K562 (cell line): ENCODE measurements at regions of chr9 and their contacts with region 1.

Region 1: DNA sequence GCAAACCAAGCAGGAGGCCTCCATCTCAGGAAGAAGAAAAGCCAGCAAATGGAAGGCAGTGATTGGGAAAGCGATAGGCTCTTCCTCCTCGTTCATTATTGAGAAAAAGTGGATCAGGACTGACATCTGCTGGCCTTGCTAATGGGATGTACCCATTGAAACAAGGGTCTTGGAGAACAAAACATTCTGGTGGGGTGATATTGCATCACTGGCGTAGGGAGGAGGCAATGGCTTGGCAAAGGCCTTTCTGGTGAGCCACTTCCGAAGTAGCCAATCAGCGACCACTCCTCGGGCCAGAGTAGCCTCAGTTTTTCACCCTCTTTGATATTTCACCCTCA is 86.7 kb upstream of the NFIB start:
- DNase-seq: peak; percentile 7 to 60 (median 28)
- ATAC-seq: peak; percentile 78
- H3K4me3 ChIP-seq: no peak overlapping the region
- H3K27ac ChIP-seq: no peak overlapping the region
- H3K4me1 ChIP-seq: peaks cover 3% of the 10 kb centered on the region in 2 experiments; a peak in 3 of 5 replicates
- H3K27me3 ChIP-seq: no peaks in the 10 kb centered on the region
- CTCF ChIP-seq: peak; percentile 38 to 60 (median 50)
- EP300 ChIP-seq: no peak
- POLR2A ChIP-seq: no peak
- RAD21 ChIP-seq: peak; percentile 46 to 78

Region 2: GRCh38 chr9:14071484-14071883 is 329.1 kb before region 1 on chr9:
- CTCF ChIA-PET with region 1: interaction called, 3 read pairs
- POLR2A ChIA-PET with region 1: no interaction called
- in situ Hi-C with region 1: no loop called
- intact Hi-C with region 1: loop called (anchors 5 kb)
- DNase-seq: peak in 2 of 4 experiments; percentile 5 to 7
- ATAC-seq: peak; percentile 36; the same call in 1 of the 3 replicates
- H3K4me3 ChIP-seq: no peak overlapping the region
- H3K27ac ChIP-seq: no peak overlapping the region
- H3K4me1 ChIP-seq: no peaks in the 10 kb centered on the region
- H3K27me3 ChIP-seq: peaks cover 0 to 11% of the 10 kb centered on the region in 2 experiments; a peak in 2 of 5 replicates
- CTCF ChIP-seq: 0 out of 6 replicates have a peak, but pooled peaks of 1 of the 3 experiments have one; percentile 15
- EP300 ChIP-seq: no peak
- POLR2A ChIP-seq: no peak
- RAD21 ChIP-seq: no peak